HEK293 (cell line): ENCODE measurements at regions of chr2 and their contacts with region 1.

Region 1: GRCh38 chr2:84925724-84926376 is 20.4 kb downstream of the TMSB10 start:
- H3K4me3 ChIP-seq: peak overlapping the region; percentile 20
- H3K27ac ChIP-seq: no peak overlapping the region
- H3K4me1 ChIP-seq: no peaks in the 10 kb centered on the region
- CTCF ChIP-seq: peak; percentile 99

Region 2: GRCh38 chr2:84881581-84882414 is 44.1 kb before region 1 on chr2:
- CTCF ChIA-PET with region 1: interaction called, 27 read pairs
- POLR2A ChIA-PET with region 1: interaction called, 3 read pairs
- H3K4me3 ChIP-seq: peak overlapping the region; percentile 50
- H3K27ac ChIP-seq: no peak overlapping the region
- H3K4me1 ChIP-seq: no peaks in the 10 kb centered on the region
- CTCF ChIP-seq: peak; percentile 83

Region 3: DNA sequence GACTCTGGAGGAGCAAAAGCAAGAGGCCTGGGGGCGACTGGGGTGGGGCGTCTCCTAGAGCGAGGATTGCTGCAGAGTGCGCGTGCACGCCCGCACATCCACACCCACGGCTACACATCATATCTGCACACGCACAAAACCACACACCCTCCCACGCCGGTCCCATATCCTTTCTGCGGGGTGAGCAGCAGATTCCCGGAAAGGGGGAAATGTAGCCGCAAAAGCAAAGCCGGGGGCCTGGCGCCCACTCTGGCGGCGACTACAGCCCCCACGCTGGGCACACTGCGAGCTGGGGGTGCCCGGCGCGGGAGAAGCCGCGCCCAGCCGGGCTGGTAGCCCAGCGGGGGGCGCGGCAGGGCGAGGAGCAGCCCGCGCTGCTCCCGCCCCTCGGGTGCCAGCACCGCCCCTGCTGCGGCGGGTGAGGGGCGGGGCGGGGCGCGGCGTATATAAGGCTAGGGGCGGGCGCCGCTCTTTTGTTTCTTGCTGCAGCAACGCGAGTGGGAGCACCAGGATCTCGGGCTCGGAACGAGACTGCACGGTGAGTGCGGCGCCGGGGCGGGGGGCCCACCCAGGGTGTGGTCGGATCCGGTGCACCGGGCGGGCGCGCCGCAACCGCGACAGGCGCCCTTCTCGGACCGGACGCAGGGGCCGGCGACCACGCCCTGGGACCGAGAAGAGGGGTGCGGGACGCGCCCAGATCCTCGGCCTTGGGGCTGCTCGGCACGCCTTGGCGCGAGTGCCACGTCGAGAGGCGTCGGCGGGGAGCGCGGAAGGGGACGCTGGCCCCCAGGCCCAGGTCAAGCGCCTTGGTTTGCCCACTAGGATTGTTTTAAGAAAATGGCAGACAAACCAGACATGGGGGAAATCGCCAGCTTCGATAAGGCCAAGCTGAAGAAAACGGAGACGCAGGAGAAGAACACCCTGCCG is 20.4 kb before region 1 on chr2 and contains the start of gene TMSB10:
- CTCF ChIA-PET with region 1: interaction called, 24 read pairs
- POLR2A ChIA-PET with region 1: interaction called, 38 read pairs
- H3K4me3 ChIP-seq: peak within 1 kb of the TSS; percentile 88
- H3K27ac ChIP-seq: peak within 1 kb of the TSS; percentile 81
- H3K4me1 ChIP-seq: peaks cover 5% of the 10 kb centered on the region
- CTCF ChIP-seq: no peak; the same call in 1 of the 2 replicates

Region 4: GRCh38 chr2:84946204-84947009 is 20.6 kb after region 1 on chr2:
- CTCF ChIA-PET with region 1: interaction called, 27 read pairs
- POLR2A ChIA-PET with region 1: interaction called, 3 read pairs
- H3K4me3 ChIP-seq: no peak overlapping the region
- H3K27ac ChIP-seq: no peak overlapping the region
- H3K4me1 ChIP-seq: no peaks in the 10 kb centered on the region
- CTCF ChIP-seq: no peak

Region 5: DNA sequence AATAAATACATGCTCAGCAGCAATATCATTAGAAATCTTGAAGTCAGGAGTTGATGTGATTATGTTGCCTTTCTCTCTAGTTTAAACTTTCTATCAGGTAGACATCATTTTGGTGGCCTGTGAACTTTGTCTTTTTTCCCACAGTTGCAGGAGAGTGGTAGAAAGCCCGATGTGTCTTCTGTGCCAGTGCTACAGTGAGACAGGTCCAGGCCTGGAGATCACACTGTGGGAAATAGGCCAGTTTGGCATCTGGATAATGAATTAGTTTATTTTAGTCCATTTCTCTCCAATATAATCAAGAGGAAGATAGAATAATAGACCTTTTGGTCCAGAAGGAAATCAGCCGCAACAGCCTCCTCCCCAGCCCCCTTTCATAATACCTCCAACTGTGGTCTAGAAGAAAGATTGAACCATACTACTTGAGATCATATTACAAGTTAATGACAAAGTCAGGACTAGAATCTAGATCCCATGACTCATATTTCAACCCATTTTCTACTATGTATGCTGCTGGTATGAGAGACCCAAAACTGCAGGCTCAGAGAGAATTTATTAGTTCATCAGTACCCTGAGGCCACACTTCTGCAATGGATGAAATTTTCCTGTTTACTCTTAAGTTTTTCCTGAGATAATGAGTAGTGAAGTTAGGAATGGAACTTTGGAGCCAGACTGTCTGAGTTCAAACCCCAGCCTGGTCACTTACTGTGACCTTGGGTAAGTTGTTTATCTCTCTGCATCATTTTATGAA is 65.7 kb after region 1 on chr2:
- CTCF ChIA-PET with region 1: interaction called, 15 read pairs
- POLR2A ChIA-PET with region 1: no interaction called
- H3K4me3 ChIP-seq: no peak overlapping the region
- H3K27ac ChIP-seq: peak overlapping the region; percentile 3; the same call in 1 of the 2 replicates
- H3K4me1 ChIP-seq: peaks cover 30% of the 10 kb centered on the region
- CTCF ChIP-seq: no peak

Region 6: DNA sequence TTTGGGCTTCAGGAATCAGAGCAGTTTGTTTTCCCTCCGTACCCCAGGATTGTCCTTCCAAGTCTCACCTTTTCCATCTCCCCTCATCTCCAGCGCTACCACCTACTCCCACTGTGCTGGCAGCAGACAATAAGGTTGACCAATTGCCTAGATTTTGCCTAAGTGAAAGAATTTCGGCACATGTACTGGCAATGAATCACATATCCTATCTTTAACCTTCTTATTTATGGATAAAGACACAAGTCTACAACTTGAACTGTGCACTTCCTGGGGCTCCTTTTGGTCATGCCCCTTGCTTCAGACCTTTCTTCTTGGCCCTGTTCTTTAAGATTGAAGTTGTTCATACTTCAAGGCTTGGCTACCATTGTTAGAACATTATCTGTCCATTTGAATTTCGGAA is 116.5 kb after region 1 on chr2:
- CTCF ChIA-PET with region 1: interaction called, 10 read pairs
- POLR2A ChIA-PET with region 1: no interaction called
- H3K4me3 ChIP-seq: no peak overlapping the region
- H3K27ac ChIP-seq: no peak overlapping the region
- H3K4me1 ChIP-seq: no peaks in the 10 kb centered on the region
- CTCF ChIP-seq: no peak

Region 7: DNA sequence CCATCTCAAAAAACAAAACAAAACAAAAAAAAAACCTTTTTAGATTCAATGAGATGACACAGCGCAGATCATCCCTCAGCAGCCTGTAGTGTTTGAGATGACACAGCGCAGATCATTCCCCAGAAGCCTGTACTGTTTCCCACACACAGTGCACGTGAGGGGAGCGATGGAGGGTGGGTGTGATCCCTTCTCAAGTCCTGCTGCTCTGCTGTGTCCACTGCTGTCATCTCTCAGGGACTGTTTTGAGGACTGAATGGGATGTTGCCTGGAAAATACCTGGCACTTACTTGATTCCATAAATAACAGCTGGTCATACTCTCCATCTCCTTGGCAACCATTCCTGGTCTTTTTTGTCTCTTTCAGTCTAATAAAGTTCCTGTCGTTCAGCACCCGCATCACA is 376.3 kb after region 1 on chr2:
- CTCF ChIA-PET with region 1: interaction called, 28 read pairs
- POLR2A ChIA-PET with region 1: no interaction called
- H3K4me3 ChIP-seq: no peak overlapping the region
- H3K27ac ChIP-seq: no peak overlapping the region
- H3K4me1 ChIP-seq: no peaks in the 10 kb centered on the region
- CTCF ChIP-seq: no peak